ENCODE measurements at regions of chr7 and their contacts with region 1.

Region 1: GRCh38 chr7:131249003-131249402 is 78.7 kb upstream of the MKLN1 start:
- DNase-seq: peak; percentile 64 to 91
- H3K4me3 ChIP-seq: no peak overlapping the region
- H3K27ac ChIP-seq: 0 out of 2 replicates have a peak overlapping the region, but pooled peaks have one; percentile 8
- H3K4me1 ChIP-seq: peaks cover 15% of the 10 kb centered on the region
- H3K27me3 ChIP-seq: no peaks in the 10 kb centered on the region
- CTCF ChIP-seq: no peak

Region 2: GRCh38 chr7:131225619-131226513 is 23.1 kb before region 1 on chr7:
- CTCF ChIA-PET with region 1: interaction called, 22 read pairs
- POLR2A ChIA-PET with region 1: no interaction called
- intact Hi-C with region 1: no loop called
- DNase-seq: peak in 1 of 2 experiments; percentile 57
- H3K4me3 ChIP-seq: no peak overlapping the region
- H3K27ac ChIP-seq: no peak overlapping the region
- H3K4me1 ChIP-seq: 0 out of 2 replicates have a peak, but pooled peaks cover 5% of the 10 kb centered on the region
- H3K27me3 ChIP-seq: no peaks in the 10 kb centered on the region
- CTCF ChIP-seq: no peak

Region 3: GRCh38 chr7:132206594-132206993 is 957.6 kb after region 1 on chr7:
- CTCF ChIA-PET with region 1: no interaction called
- POLR2A ChIA-PET with region 1: no interaction called
- intact Hi-C with region 1: no loop called
- DNase-seq: no peak
- H3K4me3 ChIP-seq: no peak overlapping the region
- H3K27ac ChIP-seq: no peak overlapping the region
- H3K4me1 ChIP-seq: no peaks in the 10 kb centered on the region
- H3K27me3 ChIP-seq: peaks cover 91% of the 10 kb centered on the region
- CTCF ChIP-seq: no peak

Measured in PC-9 (cell line).